Esophagus muscularis mucosa (tissue), 4 donors: ENCODE measurements at regions of chr16 and their contacts with region 1.

Region 1: GRCh38 chr16:67928561-67929364 is 2.9 kb downstream of the CTRL start:
- DNase-seq: no peak
- H3K4me3 ChIP-seq: no peak overlapping the region
- H3K27ac ChIP-seq: no peak overlapping the region
- H3K4me1 ChIP-seq: peaks cover 12 to 52% (median 38%) of the 10 kb centered on the region in 4 donors
- H3K27me3 ChIP-seq: no peaks in the 10 kb centered on the region
- CTCF ChIP-seq: peak; percentile 74 to 89 (median 83)
- EP300 ChIP-seq: no peak
- POLR2A ChIP-seq: no peak

Region 2: DNA sequence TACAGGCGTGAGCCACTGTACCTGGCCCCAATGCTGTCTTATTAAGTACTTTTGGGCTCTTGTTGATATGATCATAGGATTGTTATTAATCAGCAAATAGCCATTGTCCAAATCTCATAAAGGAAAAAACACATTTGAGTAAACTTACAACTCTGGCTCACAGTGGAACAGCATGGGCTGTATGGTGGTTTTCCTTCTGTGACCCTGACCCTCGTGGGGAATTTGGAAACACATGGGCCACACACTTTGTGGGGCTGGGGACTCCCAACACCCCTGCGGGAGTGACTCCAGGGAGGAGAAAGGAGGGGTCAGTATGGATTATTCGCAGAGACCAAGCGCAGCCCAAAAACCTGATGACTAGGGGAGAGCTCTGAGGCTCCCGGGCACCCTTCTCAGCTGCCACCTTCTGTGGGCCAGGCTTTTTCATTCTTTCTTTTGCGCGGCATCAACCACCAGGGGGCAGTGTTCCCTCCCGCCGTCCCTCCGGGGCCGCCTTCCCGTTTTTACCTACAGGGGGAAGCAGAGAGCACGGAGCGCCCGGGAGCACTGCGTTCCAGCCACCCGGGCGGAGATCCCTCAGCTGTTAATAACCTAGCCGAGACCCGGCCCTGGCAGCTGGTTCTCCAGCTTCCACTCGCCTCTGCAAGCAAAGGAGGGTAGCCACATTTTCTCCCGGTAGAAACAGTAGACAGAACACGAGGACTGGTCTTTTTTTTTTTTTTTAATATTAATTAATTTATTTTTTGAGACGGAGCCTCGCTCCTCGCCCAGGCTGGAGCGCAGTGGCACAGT is 112.3 kb before region 1 on chr16:
- intact Hi-C with region 1: loop called (anchors 2 kb)
- DNase-seq: peak; percentile 95
- H3K4me3 ChIP-seq: peak overlapping the region in 1 of 4 donors; percentile 4
- H3K27ac ChIP-seq: peak overlapping the region in 3 of 4 donors; percentile 10 to 57 (median 36)
- H3K4me1 ChIP-seq: peaks cover 0 to 9% (median 8%) of the 10 kb centered on the region in 4 donors
- H3K27me3 ChIP-seq: no peaks in the 10 kb centered on the region
- CTCF ChIP-seq: peak in 2 of 3 experiments; percentile 100
- EP300 ChIP-seq: no peak
- POLR2A ChIP-seq: no peak

Region 3: DNA sequence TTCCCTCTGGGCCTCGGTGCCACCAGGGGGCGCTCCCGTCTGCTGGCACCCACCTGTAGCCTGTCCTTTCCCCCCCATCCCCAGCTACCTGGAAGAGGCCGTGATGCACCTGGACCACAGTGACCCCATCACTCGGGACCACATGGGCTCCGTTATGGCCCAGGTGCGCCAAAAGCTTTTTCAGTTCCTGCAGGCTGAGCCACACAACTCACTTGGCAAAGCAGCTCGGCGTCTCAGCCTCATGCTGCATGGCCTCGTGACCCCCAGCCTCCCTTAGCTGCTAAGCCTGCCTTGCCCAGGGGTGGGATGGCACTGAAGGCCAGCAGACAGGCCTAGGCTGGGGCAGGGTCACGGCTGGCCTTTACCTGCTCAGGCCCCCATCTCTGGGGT is 44.9 kb before region 1 on chr16:
- intact Hi-C with region 1: loop called (anchors 2 kb)
- DNase-seq: no peak
- H3K4me3 ChIP-seq: no peak overlapping the region
- H3K27ac ChIP-seq: peak overlapping the region; percentile 71 to 83 (median 76)
- H3K4me1 ChIP-seq: peaks cover 19 to 42% (median 24%) of the 10 kb centered on the region in 4 donors
- H3K27me3 ChIP-seq: no peaks in the 10 kb centered on the region
- CTCF ChIP-seq: peak; percentile 84 to 96 (median 85)
- EP300 ChIP-seq: no peak
- POLR2A ChIP-seq: no peak

Region 4: GRCh38 chr16:68214726-68215125 is 286.0 kb after region 1 on chr16:
- intact Hi-C with region 1: no loop called
- DNase-seq: no peak
- H3K4me3 ChIP-seq: no peak overlapping the region
- H3K27ac ChIP-seq: no peak overlapping the region
- H3K4me1 ChIP-seq: no peaks in the 10 kb centered on the region
- H3K27me3 ChIP-seq: no peaks in the 10 kb centered on the region
- CTCF ChIP-seq: no peak
- EP300 ChIP-seq: no peak
- POLR2A ChIP-seq: no peak